ENCODE measurements at regions of chr5 and their contacts with region 1.

Region 1: DNA sequence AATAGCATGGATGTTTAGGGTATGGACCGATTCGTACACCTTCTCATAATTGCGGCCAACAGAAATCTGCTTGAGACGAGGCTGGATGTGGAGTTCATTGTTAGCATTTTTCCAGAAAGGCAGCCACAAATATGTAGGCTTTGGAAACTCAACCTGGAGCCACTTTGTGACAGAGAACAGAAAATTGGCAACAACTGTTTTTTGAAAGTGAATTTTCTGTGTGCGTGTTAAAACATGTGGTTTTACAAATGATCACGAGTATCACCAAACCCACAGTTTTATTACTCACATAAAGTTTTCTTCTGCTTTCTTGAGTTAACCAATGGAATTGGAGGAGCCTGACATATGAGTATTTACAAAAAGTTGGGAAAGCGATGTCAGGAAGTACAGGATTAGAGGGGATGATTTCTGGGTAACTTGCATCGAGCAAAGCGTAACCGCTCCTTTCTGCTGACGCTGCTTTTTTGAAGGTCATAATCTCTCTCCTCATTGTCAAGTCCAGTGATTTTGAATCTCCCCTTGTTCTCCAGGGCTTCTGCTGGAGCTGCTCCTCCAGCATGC is 138.5 kb upstream of the TAF11L2 start:
- DNase-seq: peak; percentile 80
- H3K4me3 ChIP-seq: no peak overlapping the region
- H3K27ac ChIP-seq: no peak overlapping the region
- H3K4me1 ChIP-seq: peaks cover 7% of the 10 kb centered on the region
- H3K27me3 ChIP-seq: no peaks in the 10 kb centered on the region
- CTCF ChIP-seq: no peak

Region 2: GRCh38 chr5:17290055-17290974 is 69.2 kb before region 1 on chr5:
- CTCF ChIA-PET with region 1: no interaction called
- dilution Hi-C with region 1: loop called (anchors 5 kb)
- in situ Hi-C with region 1: no loop called
- intact Hi-C with region 1: no loop called
- DNase-seq: no peak
- H3K4me3 ChIP-seq: no peak overlapping the region
- H3K27ac ChIP-seq: no peak overlapping the region
- H3K4me1 ChIP-seq: no peaks in the 10 kb centered on the region
- H3K27me3 ChIP-seq: no peaks in the 10 kb centered on the region
- CTCF ChIP-seq: no peak

Region 3: GRCh38 chr5:17398439-17398838 is 38.9 kb after region 1 on chr5:
- CTCF ChIA-PET with region 1: no interaction called
- dilution Hi-C with region 1: loop called (anchors 5 kb)
- in situ Hi-C with region 1: no loop called
- intact Hi-C with region 1: no loop called
- DNase-seq: peak; percentile 88
- H3K4me3 ChIP-seq: no peak overlapping the region
- H3K27ac ChIP-seq: no peak overlapping the region
- H3K4me1 ChIP-seq: peaks cover 14% of the 10 kb centered on the region
- H3K27me3 ChIP-seq: no peaks in the 10 kb centered on the region
- CTCF ChIP-seq: no peak